ENCODE measurements at regions of chr10 and their contacts with region 1.

Region 1: DNA sequence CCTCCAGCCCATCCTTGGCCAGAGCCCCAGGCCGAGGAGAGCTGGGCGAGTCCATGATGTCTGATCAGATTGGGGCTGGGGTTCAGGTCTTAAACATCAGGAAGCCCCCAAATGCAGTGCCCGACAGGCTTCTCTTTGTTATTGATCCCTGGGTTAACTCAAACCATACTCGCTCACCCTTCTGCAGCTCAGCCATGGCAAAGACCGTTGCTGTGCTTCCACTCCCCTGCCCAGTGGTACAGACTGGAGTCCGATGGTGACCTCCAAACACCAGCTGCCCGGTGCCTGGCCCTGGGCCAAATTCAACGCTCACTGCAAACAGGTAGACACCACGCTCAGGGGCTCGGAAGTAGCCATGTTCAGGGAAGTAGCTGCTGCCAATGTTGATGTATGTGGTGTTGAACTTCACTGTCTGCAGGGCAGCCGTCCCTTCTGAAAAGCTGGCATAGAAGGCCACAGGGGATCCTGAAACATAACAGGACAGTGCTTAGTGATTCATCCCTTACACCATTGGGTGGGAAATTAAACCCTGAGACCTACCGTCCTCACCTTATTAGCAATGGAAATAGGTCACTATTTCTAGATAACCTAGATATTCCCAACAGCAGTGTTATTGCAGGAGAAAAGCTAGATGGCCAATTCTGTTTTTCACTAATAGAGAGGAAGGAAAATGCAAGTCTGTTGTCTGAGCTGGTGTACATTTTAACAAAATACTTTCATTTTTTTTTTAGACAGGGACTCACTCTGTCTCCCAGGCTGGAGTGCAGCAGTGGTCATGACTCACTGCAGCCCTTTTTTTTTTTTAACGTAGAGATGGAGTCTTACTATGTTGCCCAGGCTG is 20.5 kb downstream of the MMRN2 start:
- DNase-seq: no peak
- H3K4me3 ChIP-seq: no peak overlapping the region
- H3K27ac ChIP-seq: no peak overlapping the region
- H3K27me3 ChIP-seq: no peaks in the 10 kb centered on the region
- CTCF ChIP-seq: no peak

Region 2: GRCh38 chr10:86693721-86694369 is 243.0 kb before region 1 on chr10:
- CTCF ChIA-PET with region 1: interaction called, 41 read pairs
- POLR2A ChIA-PET with region 1: no interaction called
- DNase-seq: no peak
- H3K4me3 ChIP-seq: no peak overlapping the region
- H3K27ac ChIP-seq: no peak overlapping the region
- H3K27me3 ChIP-seq: peaks cover 2% of the 10 kb centered on the region
- CTCF ChIP-seq: peak; percentile 84

Region 3: GRCh38 chr10:86715156-86715961 is 221.5 kb before region 1 on chr10:
- CTCF ChIA-PET with region 1: interaction called, 16 read pairs
- POLR2A ChIA-PET with region 1: no interaction called
- DNase-seq: no peak
- H3K4me3 ChIP-seq: no peak overlapping the region
- H3K27ac ChIP-seq: no peak overlapping the region
- H3K27me3 ChIP-seq: no peaks in the 10 kb centered on the region
- CTCF ChIP-seq: no peak

Region 4: DNA sequence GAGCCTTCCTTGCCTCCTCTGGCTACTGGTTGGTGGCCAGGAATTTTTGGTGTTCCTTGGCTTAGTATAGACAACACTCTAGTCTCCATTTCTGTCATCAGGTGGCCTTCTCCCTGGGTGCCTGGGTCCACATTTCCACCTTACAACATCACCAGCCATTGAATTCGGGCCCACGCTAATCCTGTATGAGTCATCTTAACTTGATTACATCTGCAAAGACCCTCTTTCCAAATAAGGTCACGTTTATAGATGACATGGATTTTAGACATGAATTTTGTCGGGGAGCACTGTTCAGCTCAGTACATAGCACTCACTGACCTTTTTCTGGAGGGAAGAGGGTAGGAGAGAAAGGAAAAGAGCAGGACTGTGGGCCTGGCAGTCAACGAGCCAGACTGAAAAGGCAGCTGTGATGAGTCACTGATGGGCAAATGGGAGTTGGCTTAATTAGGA is 18.8 kb before region 1 on chr10:
- CTCF ChIA-PET with region 1: interaction called, 10 read pairs
- POLR2A ChIA-PET with region 1: no interaction called
- DNase-seq: peak; percentile 24
- H3K4me3 ChIP-seq: no peak overlapping the region
- H3K27ac ChIP-seq: peak overlapping the region; percentile 71
- H3K27me3 ChIP-seq: no peaks in the 10 kb centered on the region
- CTCF ChIP-seq: no peak

Region 5: GRCh38 chr10:86962151-86962980 is 25.5 kb after region 1 on chr10:
- CTCF ChIA-PET with region 1: interaction called, 17 read pairs
- POLR2A ChIA-PET with region 1: interaction called, 4 read pairs
- DNase-seq: no peak
- H3K4me3 ChIP-seq: no peak overlapping the region
- H3K27ac ChIP-seq: no peak overlapping the region
- H3K27me3 ChIP-seq: no peaks in the 10 kb centered on the region
- CTCF ChIP-seq: no peak

Region 6: GRCh38 chr10:86992451-86992850 is 55.6 kb after region 1 on chr10:
- CTCF ChIA-PET with region 1: interaction called, 14 read pairs
- POLR2A ChIA-PET with region 1: no interaction called
- DNase-seq: no peak
- H3K4me3 ChIP-seq: no peak overlapping the region
- H3K27ac ChIP-seq: no peak overlapping the region
- H3K27me3 ChIP-seq: no peaks in the 10 kb centered on the region
- CTCF ChIP-seq: no peak

Measured in AG04450 (cell line).